ENCODE measurements at regions of chr1 and their contacts with region 1.

Region 1: GRCh38 chr1:153568367-153569099 is 2.9 kb upstream of the S100A2 start:
- DNase-seq: peak; percentile 82
- ATAC-seq: peak; percentile 31
- H3K4me3 Mint-ChIP-seq: peak overlapping the region; percentile 75
- H3K27ac Mint-ChIP-seq: peak overlapping the region; percentile 4
- H3K4me1 Mint-ChIP-seq: peaks cover 41% of the 10 kb centered on the region
- H3K27me3 Mint-ChIP-seq: peaks cover 10% of the 10 kb centered on the region

Region 2: DNA sequence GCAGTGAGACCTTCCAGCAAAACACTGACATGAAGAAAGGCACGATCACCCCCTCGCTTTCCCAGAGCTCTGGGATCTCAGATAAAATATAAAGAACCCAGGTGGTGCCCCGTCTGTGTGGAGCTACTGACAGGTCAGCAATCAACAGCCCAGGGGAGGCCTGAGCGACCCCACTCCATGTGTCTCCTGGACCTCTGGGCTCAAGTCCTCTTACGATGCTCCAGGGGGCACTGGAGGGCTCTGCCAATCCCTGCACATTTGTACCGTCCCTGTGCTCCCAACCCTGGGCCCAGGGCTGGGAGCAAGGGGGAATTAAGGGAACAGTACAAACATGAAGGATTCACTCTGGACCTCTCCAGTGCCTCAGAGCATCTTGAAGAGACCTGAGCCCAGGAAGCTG is 139.7 kb before region 1 on chr1:
- POLR2A ChIA-PET with region 1: no interaction called
- DNase-seq: no peak
- ATAC-seq: no peak
- H3K4me3 Mint-ChIP-seq: no peak overlapping the region
- H3K27ac Mint-ChIP-seq: no peak overlapping the region
- H3K4me1 Mint-ChIP-seq: no peaks in the 10 kb centered on the region
- H3K27me3 Mint-ChIP-seq: peaks cover 3% of the 10 kb centered on the region

Region 3: DNA sequence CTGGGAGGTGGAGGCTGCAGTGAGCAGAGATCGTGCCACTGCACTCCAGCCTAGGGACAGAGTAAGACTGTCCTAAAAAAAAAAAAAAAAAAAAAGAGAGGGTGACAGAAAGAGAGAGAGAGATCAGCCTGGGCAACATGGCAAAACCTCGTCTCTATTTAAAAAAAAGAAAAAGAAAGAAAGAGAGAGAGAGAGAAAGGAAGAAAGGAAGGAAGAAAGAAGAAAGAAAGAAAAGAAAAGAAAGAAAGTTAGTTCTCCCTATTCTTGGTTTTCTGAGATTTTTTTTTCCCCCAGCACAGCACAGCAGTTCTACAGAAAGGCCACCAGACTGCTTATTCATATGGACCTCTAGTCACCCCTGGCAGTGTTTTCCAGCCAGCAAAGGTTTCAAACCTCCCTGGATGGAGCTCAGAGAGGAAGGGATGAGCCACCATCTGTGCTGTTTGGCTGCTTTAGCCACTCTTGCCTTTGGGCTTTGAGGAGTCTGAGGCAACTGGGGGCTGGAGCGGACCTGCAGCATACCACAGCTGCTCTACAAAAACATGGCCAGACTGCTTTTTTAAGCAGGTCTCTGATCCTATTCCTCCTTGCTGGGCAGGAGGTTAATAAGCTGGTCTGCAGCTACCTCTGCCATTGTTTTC is 43.3 kb before region 1 on chr1:
- POLR2A ChIA-PET with region 1: no interaction called
- DNase-seq: peak; percentile 15
- ATAC-seq: no peak
- H3K4me3 Mint-ChIP-seq: no peak overlapping the region
- H3K27ac Mint-ChIP-seq: no peak overlapping the region
- H3K4me1 Mint-ChIP-seq: peaks cover 11% of the 10 kb centered on the region
- H3K27me3 Mint-ChIP-seq: no peaks in the 10 kb centered on the region

Region 4: DNA sequence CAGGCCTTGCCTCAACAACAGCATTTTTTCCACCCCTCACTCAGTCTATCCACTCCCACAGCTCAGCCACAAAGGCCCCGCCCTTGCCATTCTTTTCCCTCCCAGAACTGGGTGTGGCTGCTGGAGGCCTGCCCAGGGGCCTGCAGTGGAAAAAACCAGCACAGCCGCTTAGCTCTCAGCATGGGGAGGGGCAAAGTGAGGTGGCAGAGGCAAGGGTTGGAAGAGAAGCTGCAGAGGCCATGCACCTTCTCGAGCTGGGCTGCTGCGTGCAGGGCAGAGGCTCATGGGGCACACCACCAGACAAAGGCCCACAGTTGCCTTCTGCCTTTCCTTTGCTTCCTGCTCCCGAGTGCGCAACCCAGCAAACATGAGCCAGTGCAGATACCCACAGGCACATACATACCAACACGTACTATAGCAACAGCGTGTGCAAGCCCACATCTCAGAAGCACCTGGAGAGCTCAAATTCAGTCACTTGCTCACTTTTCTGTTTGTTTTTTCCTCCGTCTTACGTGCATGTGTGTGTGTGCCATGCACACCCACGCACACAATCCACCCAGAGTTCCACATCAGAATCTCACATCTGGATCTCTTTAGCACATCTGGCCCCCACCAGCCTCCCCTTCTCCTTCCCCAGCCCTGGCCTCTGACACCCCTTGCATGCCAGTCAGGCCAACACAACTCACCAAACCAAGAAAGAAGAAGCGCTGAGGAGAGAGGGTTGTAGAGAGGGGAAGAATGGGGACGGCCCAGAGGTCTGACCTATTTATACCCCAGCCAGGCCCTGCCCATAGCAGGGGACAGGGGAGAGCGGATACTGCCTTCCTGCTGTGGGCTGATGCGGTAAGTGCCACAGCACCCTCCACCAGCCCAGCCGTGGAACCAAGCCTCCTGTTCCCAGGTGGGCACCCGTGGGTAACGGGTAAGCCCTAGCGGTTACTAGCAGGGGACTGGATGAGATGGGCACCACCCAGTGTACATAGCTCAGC is 23.2 kb before region 1 on chr1 and contains the start of gene S100A4:
- POLR2A ChIA-PET with region 1: interaction called, 19 read pairs
- DNase-seq: peak; percentile 86
- ATAC-seq: peak; percentile 81
- H3K4me3 Mint-ChIP-seq: peak within 1 kb of the TSS; percentile 93
- H3K27ac Mint-ChIP-seq: peak within 1 kb of the TSS; percentile 96
- H3K4me1 Mint-ChIP-seq: peaks cover 58% of the 10 kb centered on the region
- H3K27me3 Mint-ChIP-seq: no peaks in the 10 kb centered on the region
- total RNA-seq, gene S100A4: 385 to 394 TPM

Measured in activated naive CD8-positive, alpha-beta T cell treated with anti-CD3 and anti-CD28 coated beads, Interleukin-2, amount 10 ng/mL, durations not matched to agents 7 days and 5 days (primary cell).